CD4-positive, alpha-beta T cell (primary cell): ENCODE measurements at regions of chr1 and their contacts with region 1.

Region 1: DNA sequence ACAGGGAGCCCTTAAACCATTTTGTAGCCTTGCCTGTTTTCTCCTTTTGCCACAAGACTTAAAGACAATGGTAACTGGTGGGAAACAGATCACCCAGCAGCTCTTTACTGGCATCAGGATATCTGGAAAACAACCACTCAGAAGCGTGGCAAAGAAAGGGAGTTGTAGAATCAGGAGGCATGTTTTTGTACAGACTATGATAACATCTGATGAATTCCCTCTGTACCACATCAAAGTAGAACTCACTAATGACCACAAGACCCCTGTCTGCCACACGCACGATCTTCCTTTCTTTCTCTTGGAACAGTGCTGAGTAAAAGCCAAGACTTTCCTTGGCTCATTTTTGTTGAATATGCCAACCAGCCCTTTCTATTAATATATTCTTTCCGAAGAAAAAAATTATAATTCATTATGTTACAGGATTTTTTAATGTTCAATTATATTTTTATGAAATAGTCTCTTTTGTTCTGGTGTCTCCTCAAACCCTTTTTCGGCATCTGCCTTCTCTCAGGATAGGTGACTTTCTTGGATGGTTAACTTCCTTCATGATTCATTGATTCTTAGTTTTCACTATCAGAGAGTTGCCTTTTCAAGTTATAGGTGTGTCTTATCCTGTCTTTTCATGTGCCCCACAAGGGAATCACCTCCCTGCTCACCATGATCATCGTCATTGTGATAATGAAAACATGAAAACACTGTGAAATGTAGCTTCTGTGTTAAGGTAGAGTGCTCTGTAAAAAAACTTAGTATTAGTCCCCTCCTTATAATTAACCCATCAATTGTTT is 7.9 kb upstream of the PHGDH start:
- DNase-seq: no peak
- ATAC-seq: no peak
- H3K4me3 ChIP-seq: no peak overlapping the region
- H3K4me3 Mint-ChIP-seq: no peak overlapping the region
- H3K27ac ChIP-seq: no peak overlapping the region
- H3K27ac Mint-ChIP-seq: no peak overlapping the region
- H3K4me1 ChIP-seq: no peaks in the 10 kb centered on the region
- H3K4me1 Mint-ChIP-seq: no peaks in the 10 kb centered on the region
- H3K27me3 ChIP-seq: no peaks in the 10 kb centered on the region
- H3K27me3 Mint-ChIP-seq: peaks cover 34% of the 10 kb centered on the region
- CTCF ChIP-seq: no peak

Region 2: DNA sequence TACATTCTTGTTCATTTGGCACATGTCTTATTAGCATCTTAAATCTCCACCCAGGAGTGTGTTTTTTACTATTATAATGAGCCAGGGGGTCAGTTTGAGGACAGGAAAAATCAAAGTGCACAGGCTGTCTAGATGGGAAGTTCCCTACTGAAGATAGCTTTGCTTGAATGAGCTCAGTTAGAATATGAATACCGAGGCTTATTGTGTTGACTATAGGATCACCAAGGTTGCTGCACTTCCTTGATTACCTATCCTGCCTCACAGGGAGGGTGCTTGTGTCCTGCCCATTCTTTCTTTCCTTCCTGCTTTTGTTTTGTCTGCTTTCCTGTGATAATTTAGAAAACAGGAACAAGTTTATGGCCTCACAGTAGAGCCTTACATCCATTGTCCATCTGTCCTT is 24.1 kb after region 1 on chr1:
- CTCF ChIA-PET with region 1: no interaction called
- POLR2A ChIA-PET with region 1: no interaction called
- intact Hi-C with region 1: loop called in 1 of 2 experiments (anchors 1 kb)
- DNase-seq: no peak
- ATAC-seq: no peak
- H3K4me3 ChIP-seq: no peak overlapping the region
- H3K4me3 Mint-ChIP-seq: no peak overlapping the region
- H3K27ac ChIP-seq: no peak overlapping the region
- H3K27ac Mint-ChIP-seq: no peak overlapping the region
- H3K4me1 ChIP-seq: no peaks in the 10 kb centered on the region
- H3K4me1 Mint-ChIP-seq: peaks cover 8% of the 10 kb centered on the region
- H3K27me3 ChIP-seq: no peaks in the 10 kb centered on the region
- H3K27me3 Mint-ChIP-seq: no peaks in the 10 kb centered on the region
- CTCF ChIP-seq: no peak